Activated CD4-positive, alpha-beta memory T cell treated with anti-CD3 and anti-CD28 coated beads, Interleukin-2, amount 10 ng/mL, durations not matched to agents 7 days and 5 days (primary cell): ENCODE measurements at regions of chr22 and their contacts with region 1.

Region 1: DNA sequence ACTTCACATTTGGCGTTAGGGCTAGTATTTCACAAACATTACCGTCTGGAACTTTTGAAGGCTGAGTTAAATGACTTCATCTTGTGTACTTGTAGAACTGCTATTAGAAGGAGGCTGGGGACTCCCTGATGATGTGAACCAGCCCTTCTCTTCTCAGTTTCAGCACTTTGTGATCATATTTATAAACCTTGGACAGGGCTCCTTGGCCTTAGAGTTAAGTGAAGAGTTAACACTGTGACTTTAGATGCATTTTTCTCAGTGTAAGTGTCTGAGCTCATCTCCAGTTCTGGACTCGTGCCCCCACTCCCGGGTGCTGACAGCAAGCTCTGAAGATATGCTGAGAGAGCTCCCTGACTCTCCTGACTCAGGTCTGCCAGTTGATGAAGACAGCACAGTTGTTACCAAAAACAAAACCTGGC is 8.4 kb downstream of the MIAT start:
- DNase-seq: no peak
- H3K4me3 Mint-ChIP-seq: no peak overlapping the region
- H3K27ac Mint-ChIP-seq: peak overlapping the region; percentile 84
- H3K4me1 Mint-ChIP-seq: peaks cover 74% of the 10 kb centered on the region
- H3K27me3 Mint-ChIP-seq: no peaks in the 10 kb centered on the region

Region 2: GRCh38 chr22:26550498-26551033 is 115.3 kb before region 1 on chr22:
- CTCF ChIA-PET with region 1: no interaction called
- POLR2A ChIA-PET with region 1: no interaction called
- DNase-seq: no peak
- H3K4me3 Mint-ChIP-seq: no peak overlapping the region
- H3K27ac Mint-ChIP-seq: no peak overlapping the region
- H3K4me1 Mint-ChIP-seq: peaks cover 46% of the 10 kb centered on the region
- H3K27me3 Mint-ChIP-seq: no peaks in the 10 kb centered on the region

Region 3: DNA sequence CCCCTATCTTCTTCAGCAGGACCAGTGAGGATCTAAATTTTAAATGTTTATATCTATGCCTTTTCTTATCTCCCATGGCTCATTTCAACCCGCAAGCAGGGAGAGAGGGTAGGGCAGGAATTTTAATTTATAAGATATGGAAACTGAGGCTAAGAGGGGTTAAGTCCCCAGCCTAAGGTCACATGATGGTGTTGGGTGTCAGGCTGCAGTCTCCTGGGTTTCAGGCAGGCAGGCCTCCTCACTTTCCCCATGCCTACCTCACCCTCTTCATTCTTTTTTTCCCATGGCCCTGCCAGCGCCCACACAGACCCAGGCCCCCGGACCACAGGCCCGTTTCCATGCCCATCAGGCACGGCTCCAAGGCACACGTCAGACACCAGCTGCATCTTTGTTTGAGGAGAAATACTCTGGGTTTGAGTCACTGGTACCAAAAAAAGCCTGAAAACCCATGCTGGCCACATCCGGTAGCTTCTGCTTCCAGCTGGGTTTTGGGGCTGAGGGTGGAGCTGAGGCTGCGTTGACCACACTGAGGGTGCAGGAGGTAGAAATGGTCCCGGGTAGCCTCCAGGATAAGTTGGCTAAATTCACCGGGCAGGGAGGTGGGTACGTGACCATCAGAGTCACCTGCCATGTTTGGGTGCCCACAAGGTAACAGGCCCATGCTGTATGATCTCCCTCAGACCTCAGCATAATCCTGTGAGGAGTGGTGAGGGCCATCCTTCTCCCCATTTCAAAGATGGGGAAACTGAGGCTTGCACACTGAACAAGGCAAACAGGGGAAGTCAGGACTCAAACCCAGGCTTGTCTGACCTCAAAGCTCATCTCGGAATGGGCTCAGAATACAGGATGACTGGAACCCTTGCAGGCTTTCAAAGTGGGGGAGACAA is 55.5 kb before region 1 on chr22:
- CTCF ChIA-PET with region 1: no interaction called
- POLR2A ChIA-PET with region 1: no interaction called
- DNase-seq: peak; percentile 84
- H3K4me3 Mint-ChIP-seq: peak overlapping the region; percentile 56
- H3K27ac Mint-ChIP-seq: peak overlapping the region; percentile 85
- H3K4me1 Mint-ChIP-seq: peaks cover 38% of the 10 kb centered on the region
- H3K27me3 Mint-ChIP-seq: peaks cover 22% of the 10 kb centered on the region

Region 4: DNA sequence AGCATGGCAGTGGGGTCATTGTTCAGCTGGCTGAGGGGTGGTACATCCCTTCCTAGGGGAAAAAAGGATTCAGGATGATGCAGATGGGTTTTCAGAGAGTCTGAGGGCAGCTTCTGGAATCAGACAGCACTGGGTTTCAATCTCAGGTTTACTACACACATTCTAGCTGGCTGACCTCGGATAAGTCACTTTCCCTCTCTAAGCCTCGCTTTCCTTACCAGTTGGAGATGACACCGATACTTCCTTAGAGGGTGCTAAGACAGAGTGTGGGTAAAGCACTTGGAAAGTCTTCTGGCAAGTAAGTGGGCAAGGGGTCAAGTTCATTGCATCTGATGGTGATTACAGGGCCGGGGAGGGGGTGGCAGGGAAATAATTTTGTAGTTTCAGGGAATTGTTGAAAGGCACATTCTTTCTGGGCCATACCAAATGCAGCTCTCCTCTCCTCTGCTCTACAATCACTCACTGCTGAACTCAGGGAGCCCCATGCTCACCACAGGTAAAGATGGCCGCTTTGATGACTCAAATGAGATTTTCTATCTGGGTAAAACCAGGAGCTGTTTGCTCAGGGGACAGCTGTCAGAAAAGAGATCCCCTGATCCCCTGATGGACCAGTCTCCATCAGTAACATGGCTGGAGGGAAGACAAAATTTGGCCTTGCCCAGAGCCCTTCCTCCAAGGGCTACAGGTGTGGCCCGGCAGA is 14.9 kb before region 1 on chr22:
- CTCF ChIA-PET with region 1: interaction called, 12 read pairs
- POLR2A ChIA-PET with region 1: interaction called, 117 read pairs
- DNase-seq: no peak
- H3K4me3 Mint-ChIP-seq: no peak overlapping the region
- H3K27ac Mint-ChIP-seq: no peak overlapping the region
- H3K4me1 Mint-ChIP-seq: peaks cover 58% of the 10 kb centered on the region
- H3K27me3 Mint-ChIP-seq: peaks cover 29% of the 10 kb centered on the region